CD4-positive, alpha-beta memory T cell (primary cell): ENCODE measurements at regions of chr13 and their contacts with region 1.

Region 1: DNA sequence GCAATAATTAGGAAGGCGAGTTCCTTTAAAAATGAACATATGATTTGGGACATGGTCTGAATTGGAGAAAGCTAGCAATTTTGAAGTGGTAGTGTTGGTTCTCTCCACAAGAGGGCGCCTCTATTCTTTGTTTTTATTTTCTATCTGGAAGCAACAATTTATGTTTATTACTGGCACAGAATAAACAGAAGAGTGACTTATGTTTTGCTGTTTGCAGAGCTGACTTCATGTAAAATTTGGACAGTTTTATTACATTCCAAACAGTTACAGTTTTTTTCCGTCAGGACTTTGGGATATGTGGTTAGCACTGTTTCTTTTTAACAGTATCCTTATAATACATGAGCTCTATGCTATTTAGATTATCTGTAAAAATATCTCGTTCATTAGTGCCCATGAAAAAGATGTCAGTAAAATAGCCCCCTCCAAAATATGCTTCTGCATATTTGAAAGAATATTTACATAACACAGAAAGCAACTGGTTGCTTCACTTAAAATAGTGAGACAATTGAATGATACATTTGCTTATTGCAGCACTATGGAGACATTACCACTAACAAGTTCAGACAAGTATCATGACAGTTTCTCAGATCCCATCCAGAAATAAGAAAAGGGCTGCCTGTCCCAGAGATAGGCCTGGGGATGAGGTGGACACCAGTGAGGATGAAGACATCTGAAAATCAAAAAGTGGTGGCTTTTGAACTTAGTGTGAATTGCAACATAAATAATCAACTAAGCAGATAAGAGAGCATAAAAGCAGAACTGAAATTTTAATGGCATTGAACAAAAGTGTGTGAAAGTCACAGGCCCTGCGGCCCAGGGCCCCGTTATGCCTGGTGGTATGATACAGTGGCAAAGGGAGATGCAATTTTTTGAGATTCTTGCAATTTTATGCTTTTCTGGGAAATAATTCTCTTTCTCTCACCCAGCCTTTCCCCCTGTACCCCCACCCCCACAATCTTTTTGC is 32.3 kb upstream of the FGF9 start:
- DNase-seq: peak in 4 of 5 donors; percentile 37 to 49 (median 42)
- H3K4me3 ChIP-seq: no peak overlapping the region
- H3K4me3 Mint-ChIP-seq: no peak overlapping the region
- H3K27ac ChIP-seq: no peak overlapping the region
- H3K27ac Mint-ChIP-seq: peak overlapping the region in 1 of 7 donors; percentile 37
- H3K4me1 ChIP-seq: no peaks in the 10 kb centered on the region
- H3K4me1 Mint-ChIP-seq: peaks cover 0 to 5% (median 0%) of the 10 kb centered on the region in 4 donors
- H3K27me3 ChIP-seq: no peaks in the 10 kb centered on the region
- H3K27me3 Mint-ChIP-seq: peaks cover 2 to 7% of the 10 kb centered on the region in 2 donors

Region 2: GRCh38 chr13:21608961-21609360 is 29.6 kb before region 1 on chr13:
- CTCF ChIA-PET with region 1: interaction called, 18 read pairs
- POLR2A ChIA-PET with region 1: interaction called, 9 read pairs
- intact Hi-C with region 1: no loop called
- DNase-seq: no peak
- H3K4me3 ChIP-seq: no peak overlapping the region
- H3K4me3 Mint-ChIP-seq: no peak overlapping the region
- H3K27ac ChIP-seq: no peak overlapping the region
- H3K27ac Mint-ChIP-seq: no peak overlapping the region
- H3K4me1 ChIP-seq: peaks cover 7% of the 10 kb centered on the region
- H3K4me1 Mint-ChIP-seq: peaks cover 10 to 19% (median 11%) of the 10 kb centered on the region in 4 donors
- H3K27me3 ChIP-seq: no peaks in the 10 kb centered on the region
- H3K27me3 Mint-ChIP-seq: peaks cover 7 to 22% of the 10 kb centered on the region in 2 donors

Region 3: GRCh38 chr13:21767025-21767424 is 128.4 kb after region 1 on chr13:
- CTCF ChIA-PET with region 1: interaction called, 6 read pairs
- POLR2A ChIA-PET with region 1: no interaction called
- intact Hi-C with region 1: loop called (anchors 10 kb)
- DNase-seq: no peak
- H3K4me3 ChIP-seq: no peak overlapping the region
- H3K4me3 Mint-ChIP-seq: no peak overlapping the region
- H3K27ac ChIP-seq: no peak overlapping the region
- H3K27ac Mint-ChIP-seq: no peak overlapping the region
- H3K4me1 ChIP-seq: no peaks in the 10 kb centered on the region
- H3K4me1 Mint-ChIP-seq: no peaks in the 10 kb centered on the region
- H3K27me3 ChIP-seq: no peaks in the 10 kb centered on the region
- H3K27me3 Mint-ChIP-seq: peaks cover 3 to 5% of the 10 kb centered on the region in 2 donors

Region 4: DNA sequence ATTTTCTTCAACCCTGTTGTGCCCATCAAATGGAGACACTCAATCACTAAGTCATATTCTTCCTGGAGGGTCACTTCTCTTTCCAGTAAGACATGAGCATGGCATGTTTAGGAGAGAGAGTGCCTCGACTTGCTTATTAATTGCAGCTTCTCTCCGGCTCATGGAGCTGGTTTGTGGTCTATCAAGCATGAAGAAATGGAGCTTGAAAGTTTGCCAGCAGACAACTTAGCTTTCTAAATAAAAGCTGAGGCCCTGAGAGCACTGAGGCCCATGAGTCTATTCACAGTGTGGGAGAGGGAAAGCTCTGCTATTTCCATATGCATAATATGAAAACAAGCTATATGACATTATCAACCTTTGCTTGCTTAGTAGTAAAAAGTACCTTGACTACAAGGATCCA is 410.8 kb after region 1 on chr13:
- CTCF ChIA-PET with region 1: interaction called, 14 read pairs
- POLR2A ChIA-PET with region 1: no interaction called
- intact Hi-C with region 1: no loop called
- DNase-seq: no peak
- H3K4me3 ChIP-seq: no peak overlapping the region
- H3K4me3 Mint-ChIP-seq: peak overlapping the region in 1 of 8 donors; percentile 2
- H3K27ac ChIP-seq: no peak overlapping the region
- H3K27ac Mint-ChIP-seq: peak overlapping the region in 2 of 7 donors; percentile 37 to 85
- H3K4me1 ChIP-seq: peaks cover 20% of the 10 kb centered on the region
- H3K4me1 Mint-ChIP-seq: peaks cover 16 to 48% (median 27%) of the 10 kb centered on the region in 4 donors
- H3K27me3 ChIP-seq: no peaks in the 10 kb centered on the region
- H3K27me3 Mint-ChIP-seq: peaks cover 3 to 5% of the 10 kb centered on the region in 2 donors

Region 5: GRCh38 chr13:22278336-22278929 is 639.8 kb after region 1 on chr13:
- CTCF ChIA-PET with region 1: interaction called, 66 read pairs
- POLR2A ChIA-PET with region 1: no interaction called
- intact Hi-C with region 1: loop called (anchors 1 kb)
- DNase-seq: peak; percentile 56 to 70 (median 66)
- H3K4me3 ChIP-seq: no peak overlapping the region
- H3K4me3 Mint-ChIP-seq: no peak overlapping the region
- H3K27ac ChIP-seq: no peak overlapping the region
- H3K27ac Mint-ChIP-seq: peak overlapping the region in 1 of 7 donors; percentile 2
- H3K4me1 ChIP-seq: no peaks in the 10 kb centered on the region
- H3K4me1 Mint-ChIP-seq: peaks cover 2 to 10% (median 4%) of the 10 kb centered on the region in 4 donors
- H3K27me3 ChIP-seq: no peaks in the 10 kb centered on the region
- H3K27me3 Mint-ChIP-seq: no peaks in the 10 kb centered on the region

Region 6: DNA sequence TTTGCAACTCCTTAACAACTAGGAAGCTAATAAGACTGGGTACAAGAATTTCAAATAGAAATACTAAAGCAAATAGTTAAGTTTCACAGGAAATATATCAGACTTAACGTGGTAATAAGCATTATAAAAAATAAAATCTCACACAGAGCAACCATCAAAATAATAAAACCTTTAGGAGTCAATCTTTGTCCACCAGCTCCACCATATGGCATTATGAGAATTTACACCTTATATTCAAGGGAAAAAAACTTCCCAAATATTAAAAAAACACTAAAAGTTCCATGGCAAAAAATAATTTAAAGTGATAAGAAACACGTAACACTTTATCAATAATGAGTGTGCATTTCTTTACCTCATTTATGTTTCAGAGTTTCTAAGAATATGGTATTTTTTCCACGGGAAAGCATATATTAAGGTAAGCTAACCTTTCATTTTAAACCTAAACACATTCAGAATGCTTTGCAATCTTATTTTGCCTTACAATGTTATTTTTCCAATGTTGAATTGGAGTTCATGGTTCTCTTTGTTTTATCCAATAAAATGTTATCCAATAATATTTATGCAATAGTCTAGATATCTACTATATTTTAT is 1119.0 kb after region 1 on chr13:
- CTCF ChIA-PET with region 1: interaction called, 7 read pairs
- POLR2A ChIA-PET with region 1: no interaction called
- intact Hi-C with region 1: loop called (anchors 1 kb)
- DNase-seq: no peak
- H3K4me3 ChIP-seq: no peak overlapping the region
- H3K4me3 Mint-ChIP-seq: no peak overlapping the region
- H3K27ac ChIP-seq: no peak overlapping the region
- H3K27ac Mint-ChIP-seq: no peak overlapping the region
- H3K4me1 ChIP-seq: no peaks in the 10 kb centered on the region
- H3K4me1 Mint-ChIP-seq: no peaks in the 10 kb centered on the region
- H3K27me3 ChIP-seq: no peaks in the 10 kb centered on the region
- H3K27me3 Mint-ChIP-seq: peaks cover 0 to 8% of the 10 kb centered on the region in 2 donors